Aorta (tissue), 5 donors: ENCODE measurements at regions of chr12 and their contacts with region 1.

Region 1: GRCh38 chr12:59595883-59596540 is at the start of gene SLC16A7:
- DNase-seq: peak; percentile 96 to 97
- ATAC-seq: peak; percentile 92
- H3K4me3 ChIP-seq: peak within 1 kb of the TSS; percentile 71 to 94
- H3K27ac ChIP-seq: peak within 1 kb of the TSS; percentile 95 to 97
- H3K4me1 ChIP-seq: peaks cover 3% of the 10 kb centered on the region in 2 donors
- H3K27me3 ChIP-seq: no peaks in the 10 kb centered on the region
- total RNA-seq, gene SLC16A7: 46.7 to 60.2 TPM

Region 2: GRCh38 chr12:59372956-59373355 is 223.1 kb before region 1 on chr12:
- intact Hi-C with region 1: no loop called
- DNase-seq: no peak
- ATAC-seq: no peak
- H3K4me3 ChIP-seq: no peak overlapping the region
- H3K27ac ChIP-seq: no peak overlapping the region
- H3K4me1 ChIP-seq: no peaks in the 10 kb centered on the region
- H3K27me3 ChIP-seq: no peaks in the 10 kb centered on the region

Region 3: GRCh38 chr12:59452259-59452658 is 143.8 kb before region 1 on chr12:
- intact Hi-C with region 1: loop called in 1 of 2 experiments (anchors 10 kb)
- DNase-seq: no peak
- ATAC-seq: no peak
- H3K4me3 ChIP-seq: no peak overlapping the region
- H3K27ac ChIP-seq: no peak overlapping the region
- H3K4me1 ChIP-seq: peaks cover 0 to 2% of the 10 kb centered on the region in 2 donors
- H3K27me3 ChIP-seq: no peaks in the 10 kb centered on the region

Region 4: GRCh38 chr12:59660148-59660547 is 64.1 kb after region 1 on chr12:
- intact Hi-C with region 1: loop called in 1 of 2 experiments (anchors 5 kb)
- DNase-seq: no peak
- ATAC-seq: no peak
- H3K4me3 ChIP-seq: no peak overlapping the region
- H3K27ac ChIP-seq: no peak overlapping the region
- H3K4me1 ChIP-seq: peaks cover 3% of the 10 kb centered on the region in 2 donors
- H3K27me3 ChIP-seq: no peaks in the 10 kb centered on the region

Region 5: DNA sequence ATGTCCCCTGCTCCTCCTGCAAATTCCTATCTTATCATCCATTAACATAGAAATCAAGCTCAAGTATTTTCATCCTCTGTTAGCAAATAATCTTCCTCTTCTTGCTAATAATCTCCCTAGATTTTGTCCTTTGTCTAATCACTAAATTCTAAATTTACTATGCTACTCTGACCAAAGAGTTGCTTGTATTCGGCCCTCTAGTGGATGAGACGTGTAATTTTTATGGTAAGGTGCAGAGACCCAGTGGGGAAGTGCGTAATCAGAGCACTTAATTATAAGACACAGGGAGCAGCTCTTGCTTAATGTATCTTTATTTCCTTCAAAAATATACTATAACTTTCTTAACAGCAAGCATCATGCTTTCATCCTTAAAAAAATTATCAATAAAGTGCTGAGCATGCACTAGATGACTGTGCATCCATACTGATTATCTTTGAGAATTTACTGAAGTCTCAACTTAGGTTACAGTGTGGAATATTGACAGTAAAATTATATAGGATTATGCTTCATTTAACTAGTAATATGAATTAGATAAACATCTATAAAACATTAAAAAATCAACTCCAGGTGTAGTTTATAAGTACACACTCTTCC is 212.4 kb after region 1 on chr12:
- intact Hi-C with region 1: loop called (anchors 5 to 10 kb)
- DNase-seq: no peak
- ATAC-seq: peak; percentile 80
- H3K4me3 ChIP-seq: no peak overlapping the region
- H3K27ac ChIP-seq: no peak overlapping the region
- H3K4me1 ChIP-seq: no peaks in the 10 kb centered on the region
- H3K27me3 ChIP-seq: no peaks in the 10 kb centered on the region